Right lobe of liver (tissue), 6 donors: ENCODE measurements at regions of chr10 and their contacts with region 1.

Region 1: GRCh38 chr10:131874991-131875451 is 25.8 kb upstream of the PPP2R2D start:
- DNase-seq: peak; percentile 75 to 80 (median 76)
- ATAC-seq: peak; percentile 85 to 93 (median 90)
- H3K4me3 ChIP-seq: no peak overlapping the region
- H3K27ac ChIP-seq: no peak overlapping the region
- H3K4me1 ChIP-seq: no peaks in the 10 kb centered on the region
- H3K27me3 ChIP-seq: no peaks in the 10 kb centered on the region
- CTCF ChIP-seq: peak; percentile 66 to 78 (median 76)
- POLR2A ChIP-seq: no peak

Region 2: DNA sequence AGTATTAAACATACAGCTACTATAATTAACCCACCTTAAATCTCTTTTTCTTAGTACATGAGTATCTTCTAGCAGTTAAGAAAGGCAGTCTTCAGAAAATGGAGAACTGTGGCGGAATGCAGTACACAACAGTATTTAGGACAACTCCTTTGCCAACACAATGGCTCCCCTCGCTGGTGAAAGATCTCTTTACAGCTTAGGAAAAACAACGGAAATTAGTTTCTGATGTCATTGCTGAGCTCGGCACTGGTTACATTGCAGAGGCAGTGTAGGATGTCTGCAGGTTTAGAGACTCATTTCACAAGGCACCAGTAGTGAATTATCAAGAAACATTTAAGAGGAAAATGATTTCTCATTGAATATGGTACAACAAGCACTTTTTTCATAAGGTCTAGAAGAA is 1695.4 kb before region 1 on chr10:
- intact Hi-C with region 1: loop called in 1 of 2 experiments (anchors 10 kb)
- DNase-seq: no peak
- ATAC-seq: peak; percentile 43 to 70 (median 54)
- H3K4me3 ChIP-seq: no peak overlapping the region
- H3K27ac ChIP-seq: no peak overlapping the region
- H3K4me1 ChIP-seq: no peaks in the 10 kb centered on the region
- H3K27me3 ChIP-seq: no peaks in the 10 kb centered on the region
- CTCF ChIP-seq: peak in 3 of 4 donors; percentile 19 to 38 (median 29)
- POLR2A ChIP-seq: no peak

Region 3: DNA sequence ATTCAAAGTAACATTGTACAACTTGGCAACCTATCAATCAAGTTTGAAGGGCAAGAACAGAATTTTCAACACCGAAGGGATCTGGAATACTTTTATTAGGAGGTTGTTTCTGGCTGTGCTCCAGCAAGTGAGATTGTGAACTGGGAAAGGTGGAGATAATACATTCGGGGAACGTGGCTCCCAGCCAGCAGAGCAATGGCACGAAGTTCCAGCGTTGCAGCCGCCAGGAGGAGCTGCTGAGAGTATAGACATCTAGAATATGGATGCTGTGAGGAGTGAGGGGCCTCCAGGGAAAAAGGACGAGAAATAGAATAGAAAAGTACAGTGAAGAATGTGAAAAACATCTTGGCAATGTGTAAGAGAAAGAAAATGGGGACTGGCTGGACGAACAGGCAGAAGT is 633.0 kb before region 1 on chr10:
- intact Hi-C with region 1: loop called in 1 of 2 experiments (anchors 10 kb)
- DNase-seq: peak in 1 of 3 donors; percentile 50
- ATAC-seq: peak in 2 of 4 donors; percentile 38 to 44
- H3K4me3 ChIP-seq: no peak overlapping the region
- H3K27ac ChIP-seq: no peak overlapping the region
- H3K4me1 ChIP-seq: no peaks in the 10 kb centered on the region
- H3K27me3 ChIP-seq: no peaks in the 10 kb centered on the region
- CTCF ChIP-seq: peak; percentile 26 to 48 (median 40)
- POLR2A ChIP-seq: no peak

Region 4: GRCh38 chr10:131825150-131825848 is 49.7 kb before region 1 on chr10:
- intact Hi-C with region 1: no loop called
- DNase-seq: peak; percentile 14 to 37 (median 26)
- ATAC-seq: peak; percentile 33 to 61 (median 52)
- H3K4me3 ChIP-seq: peak overlapping the region in 1 of 3 donors; percentile 14
- H3K27ac ChIP-seq: peak overlapping the region in 2 of 3 donors; percentile 14 to 33
- H3K4me1 ChIP-seq: peaks cover 0 to 48% (median 17%) of the 10 kb centered on the region in 4 donors
- H3K27me3 ChIP-seq: no peaks in the 10 kb centered on the region
- CTCF ChIP-seq: no peak
- POLR2A ChIP-seq: peak; percentile 12

Region 5: DNA sequence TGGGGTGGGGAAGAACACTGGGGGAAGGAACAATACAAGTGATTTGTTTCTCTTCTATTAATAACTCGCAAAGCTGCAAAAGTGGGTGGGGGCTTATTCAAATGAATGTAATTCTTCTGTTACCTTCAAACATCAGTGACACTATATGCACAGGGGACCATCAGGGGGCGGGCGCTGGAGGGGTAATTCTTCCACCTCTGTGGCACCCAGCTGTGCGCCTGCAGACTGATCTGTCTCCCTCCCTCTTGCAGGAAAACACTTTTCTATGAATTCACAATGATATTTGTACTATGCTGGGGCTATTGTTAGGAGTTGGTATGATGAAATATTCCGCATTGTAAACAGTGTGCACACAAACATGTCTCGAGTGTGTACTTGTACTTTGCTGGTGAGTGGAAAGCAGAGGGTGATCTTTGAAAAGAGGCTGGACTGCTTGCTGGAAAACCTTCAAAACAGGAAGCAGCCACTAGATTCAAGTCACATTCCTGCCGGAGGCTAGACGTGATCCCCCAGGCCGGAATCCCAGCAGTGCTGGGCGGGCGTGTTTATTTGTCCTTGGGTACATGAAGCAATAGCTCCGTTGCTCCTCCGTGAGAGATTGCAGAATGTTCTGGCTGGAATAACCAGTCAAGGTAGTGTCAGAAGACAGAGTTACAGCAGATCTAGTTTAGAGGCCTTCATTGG is 122.5 kb after region 1 on chr10:
- intact Hi-C with region 1: no loop called
- DNase-seq: peak; percentile 73 to 87 (median 86)
- ATAC-seq: peak; percentile 80 to 86 (median 83)
- H3K4me3 ChIP-seq: no peak overlapping the region
- H3K27ac ChIP-seq: peak overlapping the region; percentile 58 to 97 (median 85)
- H3K4me1 ChIP-seq: peaks cover 0 to 37% (median 16%) of the 10 kb centered on the region in 4 donors
- H3K27me3 ChIP-seq: no peaks in the 10 kb centered on the region
- CTCF ChIP-seq: no peak
- POLR2A ChIP-seq: no peak